CD4-positive, alpha-beta memory T cell (primary cell): ENCODE measurements at regions of chr1 and their contacts with region 1.

Region 1: GRCh38 chr1:110674337-110675059 is at the start of gene KCNA3:
- DNase-seq: peak; percentile 67 to 79 (median 69)
- H3K4me3 ChIP-seq: peak within 1 kb of the TSS; percentile 73 to 78
- H3K4me3 Mint-ChIP-seq: peak within 1 kb of the TSS; percentile 84 to 100 (median 100)
- H3K27ac ChIP-seq: peak within 1 kb of the TSS; percentile 91
- H3K27ac Mint-ChIP-seq: peak within 1 kb of the TSS; percentile 76 to 100 (median 99)
- H3K4me1 ChIP-seq: peaks cover 38% of the 10 kb centered on the region
- H3K4me1 Mint-ChIP-seq: peaks cover 28 to 79% (median 38%) of the 10 kb centered on the region in 4 donors
- H3K27me3 ChIP-seq: no peaks in the 10 kb centered on the region
- H3K27me3 Mint-ChIP-seq: no peaks in the 10 kb centered on the region
- total RNA-seq, gene KCNA3: 124 TPM

Region 2: GRCh38 chr1:110630839-110631663 is 43.4 kb before region 1 on chr1:
- CTCF ChIA-PET with region 1: interaction called, 179 read pairs
- POLR2A ChIA-PET with region 1: interaction called, 993 read pairs
- intact Hi-C with region 1: loop called (anchors 1 kb)
- DNase-seq: peak; percentile 87 to 92 (median 88)
- H3K4me3 ChIP-seq: peak overlapping the region; percentile 25 to 46
- H3K4me3 Mint-ChIP-seq: no peak overlapping the region
- H3K27ac ChIP-seq: peak overlapping the region; percentile 72
- H3K27ac Mint-ChIP-seq: no peak overlapping the region
- H3K4me1 ChIP-seq: peaks cover 95% of the 10 kb centered on the region
- H3K4me1 Mint-ChIP-seq: peaks cover 32 to 57% (median 54%) of the 10 kb centered on the region in 4 donors
- H3K27me3 ChIP-seq: no peaks in the 10 kb centered on the region
- H3K27me3 Mint-ChIP-seq: no peaks in the 10 kb centered on the region

Region 3: GRCh38 chr1:110663241-110663640 is 11.3 kb before region 1 on chr1:
- CTCF ChIA-PET with region 1: interaction called, 4 read pairs
- POLR2A ChIA-PET with region 1: interaction called, 47 read pairs
- intact Hi-C with region 1: no loop called
- DNase-seq: no peak
- H3K4me3 ChIP-seq: no peak overlapping the region
- H3K4me3 Mint-ChIP-seq: peak overlapping the region in 2 of 8 donors; percentile 11 to 45
- H3K27ac ChIP-seq: no peak overlapping the region
- H3K27ac Mint-ChIP-seq: peak overlapping the region in 4 of 7 donors; percentile 35 to 78 (median 44)
- H3K4me1 ChIP-seq: peaks cover 70% of the 10 kb centered on the region
- H3K4me1 Mint-ChIP-seq: peaks cover 24 to 34% (median 30%) of the 10 kb centered on the region in 4 donors
- H3K27me3 ChIP-seq: no peaks in the 10 kb centered on the region
- H3K27me3 Mint-ChIP-seq: no peaks in the 10 kb centered on the region

Region 4: DNA sequence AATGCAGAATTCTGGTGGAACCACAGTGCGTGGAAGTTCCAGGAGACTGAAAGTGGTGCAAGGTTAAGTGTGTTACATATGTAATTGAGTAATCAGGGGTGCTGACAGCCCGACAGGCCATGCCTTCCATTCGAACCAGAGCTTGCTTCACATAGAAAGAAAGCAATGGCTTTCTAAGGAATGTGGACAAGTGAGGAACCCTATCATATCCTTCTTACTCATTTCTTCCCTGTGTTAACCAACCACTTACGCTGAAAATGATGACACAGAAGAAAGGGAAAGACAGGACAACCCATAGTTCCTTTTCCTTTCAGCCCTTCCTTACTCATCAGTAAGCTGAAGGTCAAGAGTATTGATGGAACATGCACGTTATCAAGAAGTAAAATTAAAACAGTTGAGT is 48.3 kb after region 1 on chr1:
- CTCF ChIA-PET with region 1: no interaction called
- POLR2A ChIA-PET with region 1: interaction called, 5 read pairs
- intact Hi-C with region 1: loop called (anchors 5 kb)
- DNase-seq: no peak
- H3K4me3 ChIP-seq: no peak overlapping the region
- H3K4me3 Mint-ChIP-seq: no peak overlapping the region
- H3K27ac ChIP-seq: no peak overlapping the region
- H3K27ac Mint-ChIP-seq: no peak overlapping the region
- H3K4me1 ChIP-seq: peaks cover 19% of the 10 kb centered on the region
- H3K4me1 Mint-ChIP-seq: peaks cover 19 to 26% (median 22%) of the 10 kb centered on the region in 4 donors
- H3K27me3 ChIP-seq: no peaks in the 10 kb centered on the region
- H3K27me3 Mint-ChIP-seq: no peaks in the 10 kb centered on the region

Region 5: GRCh38 chr1:110963691-110964399 is 289.3 kb after region 1 on chr1 and contains the start of gene LRIF1:
- CTCF ChIA-PET with region 1: no interaction called
- POLR2A ChIA-PET with region 1: interaction called, 10 read pairs
- intact Hi-C with region 1: loop called (anchors 10 kb)
- DNase-seq: peak; percentile 98 to 100 (median 100)
- H3K4me3 ChIP-seq: peak within 1 kb of the TSS; percentile 90 to 95
- H3K4me3 Mint-ChIP-seq: peak within 1 kb of the TSS; percentile 81 to 96 (median 92)
- H3K27ac ChIP-seq: peak within 1 kb of the TSS; percentile 96
- H3K27ac Mint-ChIP-seq: peak within 1 kb of the TSS; percentile 93 to 100 (median 98)
- H3K4me1 ChIP-seq: peaks cover 31% of the 10 kb centered on the region
- H3K4me1 Mint-ChIP-seq: peaks cover 20 to 35% (median 27%) of the 10 kb centered on the region in 4 donors
- H3K27me3 ChIP-seq: peaks cover 3% of the 10 kb centered on the region
- H3K27me3 Mint-ChIP-seq: peaks cover 8 to 10% of the 10 kb centered on the region in 2 donors
- total RNA-seq, gene LRIF1: 27.0 to 28.2 TPM